ENCODE measurements at regions of chr14 and their contacts with region 1.

Region 1: DNA sequence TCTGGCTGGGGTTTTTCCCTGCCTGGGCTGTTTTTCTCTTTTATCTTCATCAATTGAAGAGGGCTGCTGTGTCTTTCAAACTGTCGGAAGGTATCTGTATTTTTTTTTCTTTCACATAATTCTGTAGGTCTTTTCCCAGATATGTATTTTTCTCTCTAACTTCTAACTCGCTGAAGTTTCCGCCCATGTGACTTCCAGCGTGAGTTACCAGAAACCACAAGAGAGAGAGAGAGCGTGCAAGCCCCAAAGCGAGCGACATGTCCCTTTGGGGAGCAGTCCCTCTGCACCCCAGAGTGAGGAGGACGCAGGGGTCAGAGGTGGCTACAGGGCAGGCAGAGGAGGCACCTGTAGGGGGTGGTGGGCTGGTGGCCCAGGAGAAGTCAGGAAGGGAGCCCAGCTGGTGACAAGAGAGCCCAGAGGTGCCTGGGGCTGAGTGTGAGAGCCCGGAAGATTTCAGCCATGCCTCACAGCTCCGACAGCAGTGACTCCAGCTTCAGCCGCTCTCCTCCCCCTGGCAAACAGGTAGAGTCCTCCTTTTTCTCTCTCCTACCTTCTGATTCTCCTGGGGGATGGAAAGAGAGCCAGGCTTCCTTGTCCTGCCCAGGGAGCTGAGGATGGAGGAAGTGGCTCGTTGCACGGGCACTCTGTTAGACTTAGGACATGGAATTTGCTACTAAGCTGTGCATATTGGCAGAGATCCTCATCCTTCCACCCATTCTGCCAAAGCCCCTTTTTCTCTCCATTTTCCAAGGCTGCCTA is at the start of gene BATF:
- DNase-seq: peak; percentile 85
- H3K4me3 Mint-ChIP-seq: peak within 1 kb of the TSS; percentile 99
- H3K27ac Mint-ChIP-seq: peak within 1 kb of the TSS; percentile 94
- H3K4me1 Mint-ChIP-seq: peaks cover 65% of the 10 kb centered on the region
- H3K27me3 Mint-ChIP-seq: no peaks in the 10 kb centered on the region
- total RNA-seq, gene BATF: 63.0 to 66.1 TPM

Region 2: DNA sequence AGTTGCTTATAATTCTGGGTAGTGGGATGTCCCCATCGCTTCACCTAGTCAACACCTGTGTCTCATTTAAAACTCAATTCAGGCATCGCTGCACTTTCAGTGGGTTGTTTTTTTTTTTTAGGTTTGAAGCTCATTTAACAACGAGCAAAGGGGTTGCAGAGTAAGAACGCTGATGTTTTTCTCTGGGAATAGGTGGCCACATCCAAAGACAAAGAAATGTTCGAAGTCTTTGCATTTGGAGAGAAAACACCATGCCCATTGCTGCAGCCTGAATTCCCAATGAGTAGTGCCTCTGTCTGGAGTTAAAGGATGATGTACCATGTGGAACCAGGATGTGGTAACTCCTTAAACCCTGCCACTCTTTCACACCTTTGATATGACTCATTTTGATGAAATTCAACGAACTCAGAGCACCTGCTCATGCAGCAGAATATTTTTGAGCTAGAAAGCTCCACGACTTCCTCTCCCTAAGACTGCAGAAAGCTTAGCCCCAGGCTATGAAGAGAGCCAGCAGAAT is 35.2 kb before region 1 on chr14:
- CTCF ChIA-PET with region 1: interaction called, 30 read pairs
- POLR2A ChIA-PET with region 1: interaction called, 15 read pairs
- DNase-seq: peak; percentile 40
- H3K4me3 Mint-ChIP-seq: no peak overlapping the region
- H3K27ac Mint-ChIP-seq: peak overlapping the region; percentile 61
- H3K4me1 Mint-ChIP-seq: peaks cover 39% of the 10 kb centered on the region
- H3K27me3 Mint-ChIP-seq: no peaks in the 10 kb centered on the region

Region 3: GRCh38 chr14:75497191-75497590 is 25.2 kb before region 1 on chr14:
- CTCF ChIA-PET with region 1: interaction called, 8 read pairs
- POLR2A ChIA-PET with region 1: interaction called, 35 read pairs
- DNase-seq: peak; percentile 44
- H3K4me3 Mint-ChIP-seq: peak overlapping the region; percentile 31
- H3K27ac Mint-ChIP-seq: peak overlapping the region; percentile 76
- H3K4me1 Mint-ChIP-seq: peaks cover 55% of the 10 kb centered on the region
- H3K27me3 Mint-ChIP-seq: no peaks in the 10 kb centered on the region

Region 4: GRCh38 chr14:75542588-75543091 is 20.2 kb after region 1 on chr14:
- CTCF ChIA-PET with region 1: interaction called, 11 read pairs
- POLR2A ChIA-PET with region 1: interaction called, 172 read pairs
- DNase-seq: peak; percentile 82
- H3K4me3 Mint-ChIP-seq: peak overlapping the region; percentile 57
- H3K27ac Mint-ChIP-seq: peak overlapping the region; percentile 99
- H3K4me1 Mint-ChIP-seq: peaks cover 77% of the 10 kb centered on the region
- H3K27me3 Mint-ChIP-seq: no peaks in the 10 kb centered on the region

Region 5: GRCh38 chr14:75566321-75566720 is 43.9 kb after region 1 on chr14:
- CTCF ChIA-PET with region 1: interaction called, 42 read pairs
- POLR2A ChIA-PET with region 1: interaction called, 27 read pairs
- DNase-seq: peak; percentile 84
- H3K4me3 Mint-ChIP-seq: peak overlapping the region; percentile 21
- H3K27ac Mint-ChIP-seq: peak overlapping the region; percentile 74
- H3K4me1 Mint-ChIP-seq: peaks cover 74% of the 10 kb centered on the region
- H3K27me3 Mint-ChIP-seq: no peaks in the 10 kb centered on the region

Region 6: GRCh38 chr14:75738192-75738591 is 215.8 kb after region 1 on chr14:
- CTCF ChIA-PET with region 1: no interaction called
- POLR2A ChIA-PET with region 1: no interaction called
- DNase-seq: no peak
- H3K4me3 Mint-ChIP-seq: no peak overlapping the region
- H3K27ac Mint-ChIP-seq: no peak overlapping the region
- H3K4me1 Mint-ChIP-seq: no peaks in the 10 kb centered on the region
- H3K27me3 Mint-ChIP-seq: no peaks in the 10 kb centered on the region